Colonic mucosa (tissue), 4 donors: ENCODE measurements at regions of chr20 and their contacts with region 1.

Region 1: GRCh38 chr20:5529331-5530148 is 212.8 kb upstream of the PROKR2 start:
- DNase-seq: peak; percentile 96
- H3K4me3 ChIP-seq: no peak overlapping the region
- H3K27ac ChIP-seq: no peak overlapping the region
- H3K4me1 ChIP-seq: peaks cover 13% of the 10 kb centered on the region
- H3K27me3 ChIP-seq: no peaks in the 10 kb centered on the region
- CTCF ChIP-seq: peak; percentile 78

Region 2: DNA sequence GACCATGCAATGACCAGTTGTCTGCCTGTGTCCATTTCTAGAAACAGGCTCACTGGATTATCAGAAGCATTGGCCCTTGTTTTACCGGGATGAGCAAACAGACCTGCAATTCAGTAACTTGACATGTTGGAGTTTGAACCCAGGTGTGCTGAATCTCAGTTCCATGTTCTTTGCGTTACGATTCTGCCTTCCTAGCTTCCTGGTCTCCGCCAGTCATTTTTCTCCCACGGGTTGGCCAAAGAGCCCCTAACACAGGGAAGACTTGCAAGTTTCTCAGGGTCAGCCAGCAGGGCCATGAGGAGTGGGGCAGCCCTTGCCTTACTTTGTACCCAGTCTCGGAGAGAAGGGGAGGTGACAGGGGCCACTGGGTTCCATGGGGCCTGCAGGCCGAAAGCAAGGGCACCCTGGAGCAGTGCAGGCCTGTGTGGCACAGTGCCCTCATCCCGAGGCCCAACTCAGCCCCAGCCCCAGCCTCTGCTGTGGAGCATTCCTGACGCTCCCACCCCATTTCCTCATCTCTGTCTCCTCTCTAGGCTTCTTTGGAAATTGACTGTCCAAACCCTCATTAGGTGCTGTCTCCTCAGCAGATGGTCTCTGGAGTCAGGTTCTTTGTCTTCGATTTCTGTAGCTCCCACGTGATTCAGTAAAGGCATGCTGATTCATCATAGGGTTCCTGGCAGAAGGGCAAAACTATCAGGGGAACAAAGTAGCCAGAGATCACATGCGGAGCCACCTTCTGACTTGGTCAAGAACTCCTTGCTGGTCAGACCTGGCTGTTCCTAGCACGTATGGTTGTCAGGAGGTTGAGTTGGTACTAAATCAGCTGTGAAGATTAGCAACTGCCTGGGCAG is 379.1 kb before region 1 on chr20:
- intact Hi-C with region 1: no loop called
- DNase-seq: peak; percentile 27
- H3K4me3 ChIP-seq: no peak overlapping the region
- H3K27ac ChIP-seq: peak overlapping the region; percentile 40
- H3K4me1 ChIP-seq: peaks cover 6% of the 10 kb centered on the region
- H3K27me3 ChIP-seq: no peaks in the 10 kb centered on the region
- CTCF ChIP-seq: no peak

Region 3: DNA sequence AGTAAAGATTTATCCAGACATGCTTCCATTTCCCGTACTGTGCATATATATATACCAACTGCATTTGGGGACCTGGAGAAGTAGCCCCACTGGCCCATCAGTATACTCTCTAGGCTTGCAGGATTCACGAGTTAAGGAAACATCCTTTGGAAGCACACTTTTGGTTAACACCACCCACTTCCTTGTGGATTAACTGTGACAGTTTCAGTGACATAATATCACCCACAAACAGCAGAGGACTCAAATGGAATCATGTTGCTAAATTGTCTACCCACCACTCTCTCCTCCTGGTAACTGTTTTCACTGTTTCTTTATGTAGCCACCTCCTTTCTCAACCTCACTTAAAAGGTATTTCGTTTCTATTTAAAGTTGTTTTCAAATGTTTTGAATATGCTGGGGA is 267.8 kb before region 1 on chr20:
- intact Hi-C with region 1: no loop called
- DNase-seq: no peak
- H3K4me3 ChIP-seq: no peak overlapping the region
- H3K27ac ChIP-seq: no peak overlapping the region
- H3K4me1 ChIP-seq: no peaks in the 10 kb centered on the region
- H3K27me3 ChIP-seq: no peaks in the 10 kb centered on the region
- CTCF ChIP-seq: no peak

Region 4: DNA sequence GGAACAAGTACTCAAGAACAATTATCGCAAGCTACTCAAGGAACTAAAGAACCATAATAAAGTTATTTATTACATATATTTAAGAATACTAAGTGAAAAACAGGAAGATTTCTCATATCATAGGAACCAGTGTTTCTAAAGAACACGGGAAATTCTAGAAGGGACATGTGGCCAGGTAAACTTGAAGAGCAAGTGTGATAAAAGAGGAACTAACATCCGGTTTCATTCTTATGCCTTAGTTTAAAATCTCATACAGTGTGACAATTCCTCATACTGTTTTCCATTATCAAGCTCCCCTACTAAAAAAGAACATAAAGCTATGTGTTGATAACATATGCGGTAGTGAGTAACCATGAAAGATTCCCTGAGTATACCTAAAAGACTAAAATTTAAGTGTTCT is 57.2 kb after region 1 on chr20:
- intact Hi-C with region 1: no loop called
- DNase-seq: no peak
- H3K4me3 ChIP-seq: no peak overlapping the region
- H3K27ac ChIP-seq: no peak overlapping the region
- H3K4me1 ChIP-seq: no peaks in the 10 kb centered on the region
- H3K27me3 ChIP-seq: no peaks in the 10 kb centered on the region
- CTCF ChIP-seq: no peak

Region 5: GRCh38 chr20:5788385-5788895 is 258.9 kb after region 1 on chr20:
- intact Hi-C with region 1: loop called (anchors 2 kb)
- DNase-seq: peak; percentile 90
- H3K4me3 ChIP-seq: no peak overlapping the region
- H3K27ac ChIP-seq: no peak overlapping the region
- H3K4me1 ChIP-seq: no peaks in the 10 kb centered on the region
- H3K27me3 ChIP-seq: no peaks in the 10 kb centered on the region
- CTCF ChIP-seq: peak; percentile 89

Region 6: DNA sequence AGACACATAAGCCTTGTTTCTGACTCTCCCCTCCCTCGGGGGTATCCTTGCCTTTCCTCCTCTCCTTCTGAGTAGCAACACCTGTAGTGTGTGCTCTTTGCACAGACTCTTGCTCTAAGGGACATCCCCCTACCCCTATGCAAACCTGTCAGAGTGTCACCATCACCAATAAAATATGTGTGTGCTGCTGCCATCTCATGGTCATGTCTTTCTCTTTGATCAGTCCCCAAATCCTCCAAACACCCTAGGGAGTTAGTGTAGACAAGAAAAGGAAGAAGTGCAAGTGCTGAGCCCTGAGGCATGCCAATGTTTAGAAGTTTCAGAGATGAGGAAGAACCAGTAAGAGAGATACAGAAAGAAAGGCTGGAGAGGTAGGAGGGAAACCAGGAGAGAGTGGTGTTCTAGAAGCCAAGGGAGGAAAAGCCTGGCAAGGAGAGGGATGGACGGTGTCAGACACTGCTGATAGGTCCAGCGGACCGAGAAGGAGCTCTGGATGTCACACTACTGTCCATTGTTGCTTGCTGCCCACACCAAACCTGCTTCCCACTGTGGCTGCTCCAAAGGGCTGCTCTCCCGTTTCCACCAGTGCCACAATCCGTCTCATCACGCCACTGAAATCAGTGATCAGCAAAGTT is 404.4 kb after region 1 on chr20:
- intact Hi-C with region 1: loop called (anchors 5 kb)
- DNase-seq: no peak
- H3K4me3 ChIP-seq: no peak overlapping the region
- H3K27ac ChIP-seq: no peak overlapping the region
- H3K4me1 ChIP-seq: no peaks in the 10 kb centered on the region
- H3K27me3 ChIP-seq: no peaks in the 10 kb centered on the region
- CTCF ChIP-seq: no peak

Region 7: GRCh38 chr20:6075428-6076219 is 546.1 kb after region 1 on chr20:
- intact Hi-C with region 1: loop called (anchors 2 kb)
- DNase-seq: no peak
- H3K4me3 ChIP-seq: no peak overlapping the region
- H3K27ac ChIP-seq: no peak overlapping the region
- H3K4me1 ChIP-seq: no peaks in the 10 kb centered on the region
- H3K27me3 ChIP-seq: no peaks in the 10 kb centered on the region
- CTCF ChIP-seq: no peak